Aorta (tissue), 5 donors: ENCODE measurements at regions of chr3 and their contacts with region 1.

Region 1: DNA sequence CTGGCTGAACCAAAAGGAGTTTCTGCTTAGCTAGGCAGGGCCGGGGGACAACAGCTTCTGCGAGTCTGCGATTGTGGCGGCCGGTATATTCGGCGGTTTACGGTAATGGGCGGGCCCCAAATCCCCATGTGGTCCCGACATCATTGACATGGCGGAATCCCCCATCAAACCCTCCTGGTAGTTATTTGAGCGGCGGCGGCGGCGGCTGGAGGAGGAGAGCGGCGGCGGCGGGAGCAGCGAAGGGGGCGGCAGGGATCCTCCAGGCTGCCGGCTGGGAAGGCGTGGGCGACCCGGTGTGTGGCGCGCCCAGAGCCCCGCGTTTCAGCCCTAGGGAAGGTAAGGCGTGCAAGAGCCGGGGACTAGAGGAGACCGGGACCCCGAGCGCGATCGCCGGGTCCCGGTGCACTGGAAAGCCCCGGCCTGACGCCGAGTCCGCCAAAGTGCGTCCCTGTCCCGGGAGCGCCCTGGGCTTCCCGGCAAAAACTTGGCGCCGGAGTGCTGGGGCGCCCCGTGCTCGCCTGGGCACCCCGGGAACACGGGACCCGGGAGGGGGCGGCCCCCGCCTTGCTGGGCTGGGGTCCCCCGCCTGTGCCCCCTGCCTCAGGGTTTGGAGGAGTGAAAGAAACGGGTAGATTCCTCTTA is at the start of gene FNDC3B:
- DNase-seq: peak; percentile 96 to 97
- ATAC-seq: peak; percentile 95
- H3K4me3 ChIP-seq: peak within 1 kb of the TSS; percentile 84 to 96
- H3K27ac ChIP-seq: peak within 1 kb of the TSS; percentile 91 to 96
- H3K4me1 ChIP-seq: no peaks in the 10 kb centered on the region
- H3K27me3 ChIP-seq: no peaks in the 10 kb centered on the region
- total RNA-seq, gene FNDC3B: 223 to 239 TPM

Region 2: GRCh38 chr3:170429050-170429449 is 1610.5 kb before region 1 on chr3:
- intact Hi-C with region 1: no loop called
- DNase-seq: no peak
- ATAC-seq: no peak
- H3K4me3 ChIP-seq: no peak overlapping the region
- H3K27ac ChIP-seq: no peak overlapping the region
- H3K4me1 ChIP-seq: no peaks in the 10 kb centered on the region
- H3K27me3 ChIP-seq: no peaks in the 10 kb centered on the region

Region 3: GRCh38 chr3:171980578-171981270 is 58.8 kb before region 1 on chr3:
- intact Hi-C with region 1: no loop called
- DNase-seq: no peak
- ATAC-seq: no peak
- H3K4me3 ChIP-seq: no peak overlapping the region
- H3K27ac ChIP-seq: no peak overlapping the region
- H3K4me1 ChIP-seq: no peaks in the 10 kb centered on the region
- H3K27me3 ChIP-seq: no peaks in the 10 kb centered on the region

Region 4: GRCh38 chr3:172057059-172057458 is 17.5 kb after region 1 on chr3:
- intact Hi-C with region 1: loop called in 1 of 2 experiments (anchors 1 kb)
- DNase-seq: no peak
- ATAC-seq: no peak
- H3K4me3 ChIP-seq: no peak overlapping the region
- H3K27ac ChIP-seq: peak overlapping the region in 1 of 2 donors; percentile 57
- H3K4me1 ChIP-seq: peaks cover 4 to 15% of the 10 kb centered on the region in 2 donors
- H3K27me3 ChIP-seq: no peaks in the 10 kb centered on the region

Region 5: DNA sequence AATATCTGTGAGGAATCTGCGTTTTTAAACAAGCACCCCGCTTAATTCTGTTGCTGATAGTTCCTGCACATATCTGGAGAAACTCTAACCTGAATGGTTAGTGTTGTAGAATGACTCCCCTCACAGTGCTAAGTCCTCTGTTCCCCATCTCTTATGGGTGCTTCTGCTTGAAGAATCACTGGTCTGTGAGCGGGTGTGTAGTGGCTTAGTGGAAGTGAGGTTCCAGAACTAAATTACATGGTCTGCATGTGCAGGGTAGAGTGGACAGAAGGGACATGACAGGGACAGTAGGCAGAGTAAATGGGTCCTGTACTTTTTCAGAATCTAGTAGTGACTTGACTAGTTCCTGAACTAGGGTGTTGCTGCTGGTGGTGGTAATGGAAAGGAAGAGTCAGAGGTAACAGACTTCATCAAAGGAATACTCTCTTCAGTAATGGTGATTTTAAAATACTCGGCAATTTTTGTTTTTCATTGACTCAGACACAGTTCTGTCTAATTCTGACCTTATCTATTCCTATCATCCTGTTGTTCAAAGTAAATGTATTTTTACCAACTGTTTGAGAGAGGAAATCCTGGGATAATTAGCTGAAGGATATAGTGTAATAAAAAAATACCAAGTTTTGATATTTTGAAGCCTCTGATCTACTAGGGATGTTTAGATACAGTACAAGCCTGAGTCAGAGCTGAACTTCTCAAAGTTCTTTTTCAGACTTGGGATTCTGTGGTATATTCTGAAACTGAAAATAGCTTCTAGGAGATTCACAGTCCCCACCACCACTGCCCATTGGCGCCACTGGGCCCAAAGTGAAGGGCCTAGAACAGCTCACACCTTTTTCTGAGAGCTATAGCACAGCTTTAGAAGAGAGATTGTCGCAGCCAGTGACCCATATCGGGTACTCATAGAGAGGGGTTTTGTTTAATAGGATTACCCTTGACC is 55.3 kb after region 1 on chr3:
- intact Hi-C with region 1: loop called in 1 of 2 experiments (anchors 10 kb)
- DNase-seq: no peak
- ATAC-seq: no peak
- H3K4me3 ChIP-seq: no peak overlapping the region
- H3K27ac ChIP-seq: peak overlapping the region in 1 of 2 donors; percentile 48
- H3K4me1 ChIP-seq: peaks cover 5 to 9% of the 10 kb centered on the region in 2 donors
- H3K27me3 ChIP-seq: no peaks in the 10 kb centered on the region

Region 6: DNA sequence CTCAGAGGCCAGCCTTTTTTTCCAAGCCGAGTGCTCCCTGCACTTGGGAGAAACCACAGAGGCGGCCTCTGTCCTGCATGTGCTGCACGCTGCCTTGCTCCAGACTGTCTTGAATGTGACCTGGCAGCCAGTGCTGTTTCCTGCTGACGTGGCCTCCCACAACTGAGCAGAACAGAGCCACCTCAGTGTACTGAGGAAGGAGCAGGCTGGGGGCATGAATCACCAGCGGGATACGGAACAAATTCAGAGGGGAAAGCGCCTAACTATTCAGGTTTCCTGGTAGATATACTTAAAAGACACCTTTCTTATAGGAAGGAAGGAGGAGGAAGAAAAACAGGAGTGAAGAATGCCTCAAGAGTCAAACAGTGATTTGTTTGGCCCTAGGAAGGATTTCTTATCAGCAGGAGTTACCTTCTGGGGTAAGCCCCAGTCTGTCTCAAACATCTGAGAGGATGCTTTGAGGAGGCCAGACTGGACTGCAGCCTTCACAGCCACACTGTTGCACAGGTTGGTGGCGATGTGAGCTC is 113.8 kb after region 1 on chr3:
- intact Hi-C with region 1: loop called in 1 of 2 experiments (anchors 5 kb)
- DNase-seq: peak; percentile 95
- ATAC-seq: peak; percentile 99
- H3K4me3 ChIP-seq: no peak overlapping the region
- H3K27ac ChIP-seq: peak overlapping the region; percentile 96 to 99
- H3K4me1 ChIP-seq: peaks cover 6 to 15% of the 10 kb centered on the region in 2 donors
- H3K27me3 ChIP-seq: no peaks in the 10 kb centered on the region

Region 7: DNA sequence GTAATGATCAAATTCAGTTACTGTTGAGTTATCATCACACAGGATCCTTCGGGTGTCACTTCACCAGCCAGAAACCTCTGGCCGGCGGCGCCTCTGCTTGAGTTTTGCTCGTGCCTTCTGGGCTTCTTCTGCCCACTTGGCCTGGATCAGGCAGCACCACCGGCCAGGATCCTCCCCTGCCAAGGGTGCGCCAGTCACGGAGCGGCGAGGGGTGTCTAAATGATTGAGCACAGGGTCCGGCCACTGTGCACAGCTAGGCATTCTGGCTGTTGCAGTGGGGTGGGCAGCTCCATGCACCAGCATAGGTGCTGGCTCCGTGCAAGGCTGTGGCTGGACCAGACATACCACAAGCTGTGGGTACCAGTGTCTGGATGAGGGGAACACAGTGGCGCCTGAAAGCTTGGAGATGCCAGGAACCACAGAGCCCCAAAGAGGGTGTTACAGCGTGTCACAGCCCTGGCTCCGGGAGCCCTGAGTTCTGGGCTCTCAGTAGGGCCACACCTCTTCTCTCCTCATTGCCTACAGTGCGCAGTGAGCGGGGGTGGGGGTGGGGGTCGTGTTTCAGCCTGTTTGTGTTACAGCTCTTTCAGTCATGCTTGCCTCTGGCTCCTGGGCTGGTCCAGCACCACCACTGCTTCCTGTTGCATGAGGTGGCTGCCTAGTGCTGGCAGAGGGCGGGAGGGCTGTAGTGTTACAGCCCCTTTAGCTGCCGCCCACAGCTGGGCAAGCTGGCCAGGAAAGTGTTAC is 169.2 kb after region 1 on chr3:
- intact Hi-C with region 1: loop called in 1 of 2 experiments (anchors 5 kb)
- DNase-seq: peak; percentile 70 to 83
- ATAC-seq: peak; percentile 59
- H3K4me3 ChIP-seq: no peak overlapping the region
- H3K27ac ChIP-seq: peak overlapping the region; percentile 78 to 91
- H3K4me1 ChIP-seq: peaks cover 9 to 16% of the 10 kb centered on the region in 2 donors
- H3K27me3 ChIP-seq: no peaks in the 10 kb centered on the region

Region 8: GRCh38 chr3:172332256-172333041 is 292.9 kb after region 1 on chr3:
- intact Hi-C with region 1: loop called in 1 of 2 experiments (anchors 5 kb)
- DNase-seq: peak in 1 of 2 donors; percentile 62
- ATAC-seq: peak; percentile 93
- H3K4me3 ChIP-seq: no peak overlapping the region
- H3K27ac ChIP-seq: peak overlapping the region in 1 of 2 donors; percentile 4
- H3K4me1 ChIP-seq: no peaks in the 10 kb centered on the region
- H3K27me3 ChIP-seq: no peaks in the 10 kb centered on the region